Activated CD4-positive, alpha-beta memory T cell treated with anti-CD3 and anti-CD28 coated beads for 36 hours (primary cell): ENCODE measurements at regions of chr1 and their contacts with region 1.

Region 1: GRCh38 chr1:24415334-24415909 is at the start of gene NIPAL3:
- DNase-seq: peak; percentile 99
- H3K4me3 Mint-ChIP-seq: peak within 1 kb of the TSS; percentile 98
- H3K27ac Mint-ChIP-seq: peak within 1 kb of the TSS; percentile 89
- H3K4me1 Mint-ChIP-seq: peaks cover 51% of the 10 kb centered on the region
- H3K27me3 Mint-ChIP-seq: no peaks in the 10 kb centered on the region
- total RNA-seq, gene NIPAL3: 39.3 to 42.4 TPM

Region 2: GRCh38 chr1:24150234-24151174 is 264.9 kb before region 1 on chr1:
- CTCF ChIA-PET with region 1: interaction called, 18 read pairs
- POLR2A ChIA-PET with region 1: no interaction called
- intact Hi-C with region 1: no loop called
- DNase-seq: peak; percentile 93
- H3K4me3 Mint-ChIP-seq: peak overlapping the region; percentile 63
- H3K27ac Mint-ChIP-seq: no peak overlapping the region
- H3K4me1 Mint-ChIP-seq: peaks cover 17% of the 10 kb centered on the region
- H3K27me3 Mint-ChIP-seq: peaks cover 16% of the 10 kb centered on the region

Region 3: DNA sequence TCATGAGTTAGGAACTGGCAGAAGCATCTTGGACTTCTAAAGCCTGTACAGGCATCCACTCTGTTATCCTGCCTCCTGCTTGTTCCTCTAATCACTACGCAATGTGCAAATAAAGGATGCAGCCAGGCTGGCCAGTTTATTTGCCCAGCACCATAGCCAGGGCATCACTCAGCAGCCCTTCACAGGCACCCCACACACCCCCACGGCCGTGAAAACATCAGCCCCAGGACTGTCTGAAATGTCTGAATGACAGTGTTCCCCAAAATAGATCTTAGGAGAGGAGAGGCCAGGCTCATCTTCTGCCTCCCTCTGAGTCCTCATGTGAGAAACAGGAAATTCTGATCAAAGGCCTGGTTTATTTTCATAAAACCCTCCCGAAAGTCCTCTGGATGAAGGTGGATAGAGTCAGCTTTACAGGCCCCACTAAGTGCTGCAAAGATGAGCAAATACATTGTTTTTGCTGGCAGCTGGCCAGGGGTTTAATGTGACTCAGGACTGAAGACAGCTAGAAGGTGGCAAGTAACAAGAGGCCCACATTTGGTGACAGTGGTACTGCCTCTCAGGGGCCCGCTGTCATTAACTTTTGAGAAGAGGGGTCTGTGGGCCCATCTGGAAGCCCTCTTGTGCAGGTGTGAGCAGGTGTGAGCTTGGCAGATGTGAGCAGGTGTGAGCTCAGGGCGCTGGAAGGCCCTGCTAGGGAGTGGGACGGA is 63.3 kb before region 1 on chr1:
- CTCF ChIA-PET with region 1: no interaction called
- POLR2A ChIA-PET with region 1: no interaction called
- intact Hi-C with region 1: no loop called
- DNase-seq: peak; percentile 87
- H3K4me3 Mint-ChIP-seq: no peak overlapping the region
- H3K27ac Mint-ChIP-seq: peak overlapping the region; percentile 58
- H3K4me1 Mint-ChIP-seq: peaks cover 36% of the 10 kb centered on the region
- H3K27me3 Mint-ChIP-seq: peaks cover 1% of the 10 kb centered on the region

Region 4: GRCh38 chr1:24374891-24375786 is 40.3 kb before region 1 on chr1:
- CTCF ChIA-PET with region 1: no interaction called
- POLR2A ChIA-PET with region 1: no interaction called
- intact Hi-C with region 1: no loop called
- DNase-seq: no peak
- H3K4me3 Mint-ChIP-seq: no peak overlapping the region
- H3K27ac Mint-ChIP-seq: no peak overlapping the region
- H3K4me1 Mint-ChIP-seq: no peaks in the 10 kb centered on the region
- H3K27me3 Mint-ChIP-seq: no peaks in the 10 kb centered on the region

Region 5: DNA sequence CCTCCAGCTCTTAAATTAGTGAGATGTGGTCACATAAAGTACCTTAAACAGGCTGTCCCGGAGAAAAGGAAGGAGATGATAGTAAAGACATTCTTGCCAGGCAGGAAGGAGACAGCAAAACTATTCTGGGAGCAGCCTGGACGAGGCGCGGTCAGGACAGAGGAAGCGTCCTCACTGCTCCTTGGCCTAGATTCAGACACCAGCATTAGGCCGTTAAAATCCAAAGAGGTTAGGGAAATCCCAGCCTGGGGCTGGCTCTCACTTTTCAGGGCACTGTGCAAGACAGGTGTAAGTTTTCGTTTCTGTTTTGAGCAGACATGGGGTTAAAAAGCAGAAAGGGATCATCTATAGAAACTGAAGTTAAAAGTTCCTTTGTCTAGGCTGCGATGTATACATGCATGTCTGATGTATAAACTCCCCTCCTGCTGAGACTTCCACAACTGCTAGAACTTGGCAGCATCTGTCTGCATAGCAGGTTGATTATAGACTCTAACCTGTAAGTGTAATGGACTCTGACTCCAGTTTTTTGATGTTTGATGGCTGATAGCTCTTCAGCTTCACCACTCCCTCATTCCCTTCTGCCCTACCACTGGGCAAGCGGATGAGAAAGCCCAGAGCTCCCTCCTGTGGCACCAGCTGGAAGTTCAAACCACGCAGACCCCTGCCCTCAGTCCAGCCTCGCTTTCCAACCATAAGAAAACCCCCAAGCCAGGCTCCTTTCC is 23.4 kb before region 1 on chr1:
- CTCF ChIA-PET with region 1: interaction called, 31 read pairs
- POLR2A ChIA-PET with region 1: interaction called, 3 read pairs
- intact Hi-C with region 1: no loop called
- DNase-seq: peak; percentile 79
- H3K4me3 Mint-ChIP-seq: peak overlapping the region; percentile 68
- H3K27ac Mint-ChIP-seq: peak overlapping the region; percentile 82
- H3K4me1 Mint-ChIP-seq: peaks cover 27% of the 10 kb centered on the region
- H3K27me3 Mint-ChIP-seq: no peaks in the 10 kb centered on the region

Region 6: GRCh38 chr1:24486331-24487065 is 71.1 kb after region 1 on chr1:
- CTCF ChIA-PET with region 1: interaction called, 15 read pairs
- POLR2A ChIA-PET with region 1: interaction called, 8 read pairs
- intact Hi-C with region 1: loop called (anchors 1 kb)
- DNase-seq: peak; percentile 47
- H3K4me3 Mint-ChIP-seq: peak overlapping the region; percentile 72
- H3K27ac Mint-ChIP-seq: peak overlapping the region; percentile 95
- H3K4me1 Mint-ChIP-seq: peaks cover 78% of the 10 kb centered on the region
- H3K27me3 Mint-ChIP-seq: no peaks in the 10 kb centered on the region

Region 7: DNA sequence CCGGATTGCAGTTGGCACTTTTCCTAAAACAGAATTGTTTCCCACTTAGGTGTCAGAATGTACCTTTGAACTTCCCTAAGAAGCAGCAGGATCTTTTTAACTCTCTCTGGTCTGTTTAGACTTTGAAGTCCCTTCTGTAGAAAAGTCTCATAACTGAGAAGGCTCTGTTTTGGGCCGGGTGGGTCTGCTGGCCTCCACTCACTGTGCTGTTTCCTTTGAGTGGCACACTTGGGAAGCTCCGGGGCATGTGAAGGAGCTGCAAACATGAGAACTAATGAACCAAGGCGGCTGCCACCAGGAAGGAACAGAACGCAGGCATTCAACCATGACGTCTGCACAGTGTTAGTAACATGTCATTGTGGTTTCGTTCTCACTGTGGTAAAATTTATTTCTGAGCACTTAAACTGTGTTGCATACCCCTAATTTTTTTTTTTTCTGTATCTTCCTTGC is 121.0 kb after region 1 on chr1:
- CTCF ChIA-PET with region 1: interaction called, 79 read pairs
- POLR2A ChIA-PET with region 1: interaction called, 9 read pairs
- intact Hi-C with region 1: loop called (anchors 1 kb)
- DNase-seq: peak; percentile 81
- H3K4me3 Mint-ChIP-seq: peak overlapping the region; percentile 76
- H3K27ac Mint-ChIP-seq: peak overlapping the region; percentile 99
- H3K4me1 Mint-ChIP-seq: peaks cover 83% of the 10 kb centered on the region
- H3K27me3 Mint-ChIP-seq: no peaks in the 10 kb centered on the region

Region 8: GRCh38 chr1:24635195-24635843 is 219.9 kb after region 1 on chr1:
- CTCF ChIA-PET with region 1: interaction called, 5 read pairs
- POLR2A ChIA-PET with region 1: no interaction called
- intact Hi-C with region 1: loop called (anchors 1 kb)
- DNase-seq: no peak
- H3K4me3 Mint-ChIP-seq: no peak overlapping the region
- H3K27ac Mint-ChIP-seq: peak overlapping the region; percentile 25
- H3K4me1 Mint-ChIP-seq: peaks cover 14% of the 10 kb centered on the region
- H3K27me3 Mint-ChIP-seq: peaks cover 2% of the 10 kb centered on the region

Region 9: GRCh38 chr1:24914226-24915069 is 499.0 kb after region 1 on chr1:
- CTCF ChIA-PET with region 1: no interaction called
- POLR2A ChIA-PET with region 1: no interaction called
- intact Hi-C with region 1: no loop called
- DNase-seq: no peak
- H3K4me3 Mint-ChIP-seq: no peak overlapping the region
- H3K27ac Mint-ChIP-seq: peak overlapping the region; percentile 73
- H3K4me1 Mint-ChIP-seq: peaks cover 80% of the 10 kb centered on the region
- H3K27me3 Mint-ChIP-seq: no peaks in the 10 kb centered on the region